ENCODE measurements at regions of chr16 and their contacts with region 1.

Region 1: GRCh38 chr16:71808593-71809459 is at the start of gene AP1G1:
- DNase-seq: peak; percentile 97
- H3K4me3 Mint-ChIP-seq: peak within 1 kb of the TSS; percentile 94
- H3K27ac Mint-ChIP-seq: peak within 1 kb of the TSS; percentile 100
- H3K4me1 Mint-ChIP-seq: peaks cover 20% of the 10 kb centered on the region
- H3K27me3 Mint-ChIP-seq: no peaks in the 10 kb centered on the region
- total RNA-seq, gene AP1G1: 98.3 and 99.5 TPM in 2 replicates

Region 2: DNA sequence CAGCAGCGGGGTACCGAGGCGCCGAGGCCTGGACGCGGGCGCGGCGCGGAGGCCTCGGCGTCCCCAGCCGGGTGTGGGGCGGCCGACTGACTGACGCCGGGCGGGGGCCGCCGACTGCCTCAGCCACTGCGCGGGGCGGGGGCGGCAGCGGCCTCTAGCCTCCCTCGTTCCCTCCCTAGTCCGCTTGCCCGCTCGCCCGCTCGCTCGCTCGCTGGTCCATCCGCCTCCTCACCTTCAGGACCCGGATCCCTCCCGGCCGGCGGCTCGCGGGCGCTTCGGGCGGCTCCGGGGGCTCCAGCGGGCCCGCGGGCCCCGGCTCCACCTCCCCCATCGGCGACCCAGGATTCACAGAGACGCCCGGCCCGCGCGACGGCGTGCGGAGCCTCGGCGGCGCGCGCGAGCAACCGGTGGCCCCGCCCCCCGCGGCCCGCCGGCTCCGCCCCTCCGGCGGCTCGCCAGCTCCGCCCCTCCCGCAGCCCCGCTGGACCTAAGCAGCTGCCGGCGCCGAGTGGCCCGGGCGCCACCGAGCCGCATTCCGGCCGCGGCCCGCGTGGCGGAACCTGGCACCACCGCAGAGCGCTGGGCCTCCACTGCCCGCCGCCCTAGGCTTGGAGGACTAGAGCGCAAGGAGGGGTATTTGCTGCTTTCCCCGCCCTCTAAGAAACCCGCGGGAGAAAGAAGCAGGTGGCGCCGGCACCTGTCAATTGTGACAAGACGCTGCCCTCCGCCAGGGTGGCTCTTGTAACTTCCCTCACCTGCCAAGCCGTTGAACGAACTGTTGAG is 85.1 kb before region 1 on chr16:
- intact Hi-C with region 1: loop called (anchors 2 kb)
- DNase-seq: peak; percentile 94
- H3K4me3 Mint-ChIP-seq: peak overlapping the region; percentile 79
- H3K27ac Mint-ChIP-seq: peak overlapping the region; percentile 53
- H3K4me1 Mint-ChIP-seq: peaks cover 13% of the 10 kb centered on the region
- H3K27me3 Mint-ChIP-seq: peaks cover 13% of the 10 kb centered on the region

Region 3: GRCh38 chr16:71796501-71797097 is 12.2 kb before region 1 on chr16:
- intact Hi-C with region 1: loop called (anchors 1 kb)
- DNase-seq: no peak
- H3K4me3 Mint-ChIP-seq: no peak overlapping the region
- H3K27ac Mint-ChIP-seq: no peak overlapping the region
- H3K4me1 Mint-ChIP-seq: peaks cover 33% of the 10 kb centered on the region
- H3K27me3 Mint-ChIP-seq: no peaks in the 10 kb centered on the region

Region 4: GRCh38 chr16:71883849-71884638 is 75.2 kb after region 1 on chr16 and contains the start of gene ZNF821:
- intact Hi-C with region 1: loop called (anchors 1 kb)
- DNase-seq: peak; percentile 92
- H3K4me3 Mint-ChIP-seq: peak within 1 kb of the TSS; percentile 93
- H3K27ac Mint-ChIP-seq: peak within 1 kb of the TSS; percentile 90
- H3K4me1 Mint-ChIP-seq: peaks cover 39% of the 10 kb centered on the region
- H3K27me3 Mint-ChIP-seq: peaks cover 13% of the 10 kb centered on the region
- total RNA-seq, gene ZNF821: 5.9 and 6.5 TPM in 2 replicates

Region 5: GRCh38 chr16:71961066-71962039 is 152.5 kb after region 1 on chr16:
- intact Hi-C with region 1: loop called (anchors 10 kb)
- DNase-seq: peak; percentile 94
- H3K4me3 Mint-ChIP-seq: no peak overlapping the region
- H3K27ac Mint-ChIP-seq: no peak overlapping the region
- H3K4me1 Mint-ChIP-seq: peaks cover 5% of the 10 kb centered on the region
- H3K27me3 Mint-ChIP-seq: peaks cover 8% of the 10 kb centered on the region

Region 6: GRCh38 chr16:71985262-71985974 is 176.6 kb after region 1 on chr16:
- intact Hi-C with region 1: no loop called
- DNase-seq: no peak
- H3K4me3 Mint-ChIP-seq: no peak overlapping the region
- H3K27ac Mint-ChIP-seq: no peak overlapping the region
- H3K4me1 Mint-ChIP-seq: no peaks in the 10 kb centered on the region
- H3K27me3 Mint-ChIP-seq: peaks cover 15% of the 10 kb centered on the region

Region 7: DNA sequence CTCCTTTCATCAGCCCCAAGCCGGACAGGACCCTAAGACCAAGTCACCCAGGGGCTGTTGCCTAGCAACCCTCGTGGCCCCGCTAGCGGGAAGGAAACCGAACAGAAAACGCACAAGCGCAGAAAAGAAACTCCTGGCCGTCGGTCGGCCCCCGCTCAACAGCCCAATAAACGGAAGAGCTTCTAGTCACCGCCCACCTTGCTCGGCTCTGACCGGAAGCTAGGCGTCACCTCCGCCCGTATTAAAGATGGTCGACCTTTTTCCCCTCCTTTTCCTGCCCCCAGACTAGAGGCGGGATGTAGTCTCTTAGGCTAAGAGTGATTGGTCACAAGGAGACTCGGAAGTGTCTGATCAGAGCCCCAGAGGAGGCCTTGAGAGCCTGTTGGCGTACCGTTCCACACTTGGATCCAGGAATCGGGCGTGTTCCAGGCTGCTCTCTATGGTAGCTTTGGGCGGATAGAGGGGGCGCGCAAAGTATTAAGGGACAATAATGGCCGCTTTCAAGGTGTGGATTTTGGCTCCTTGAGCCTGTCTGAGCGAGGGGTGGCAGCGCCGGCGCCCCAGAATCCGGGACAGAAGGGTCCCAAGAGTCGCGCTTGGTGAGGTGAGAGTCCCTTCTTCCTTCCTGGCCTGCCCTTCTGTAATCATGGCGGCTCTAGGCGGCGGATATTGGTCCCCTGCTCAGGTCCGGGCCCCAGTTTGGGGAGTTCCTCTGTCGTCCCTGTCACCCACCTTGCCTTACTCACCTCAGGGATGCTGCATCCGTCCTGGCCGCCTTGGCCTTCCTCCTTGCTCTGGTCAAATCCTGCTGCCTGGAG is 284.8 kb after region 1 on chr16 and contains the starts of genes DHX38 and TXNL4B:
- intact Hi-C with region 1: loop called (anchors 5 kb)
- DNase-seq: peak; percentile 98
- H3K4me3 Mint-ChIP-seq: peak within 1 kb of the TSS; percentile 97
- H3K27ac Mint-ChIP-seq: peak within 1 kb of the TSS; percentile 94
- H3K4me1 Mint-ChIP-seq: peaks cover 45% of the 10 kb centered on the region
- H3K27me3 Mint-ChIP-seq: no peaks in the 10 kb centered on the region
- total RNA-seq, gene DHX38: 91.0 and 98.1 TPM in 2 replicates
- total RNA-seq, gene TXNL4B: 23.4 and 23.7 TPM in 2 replicates